ENCODE measurements at regions of chr9 and their contacts with region 1.

Region 1: DNA sequence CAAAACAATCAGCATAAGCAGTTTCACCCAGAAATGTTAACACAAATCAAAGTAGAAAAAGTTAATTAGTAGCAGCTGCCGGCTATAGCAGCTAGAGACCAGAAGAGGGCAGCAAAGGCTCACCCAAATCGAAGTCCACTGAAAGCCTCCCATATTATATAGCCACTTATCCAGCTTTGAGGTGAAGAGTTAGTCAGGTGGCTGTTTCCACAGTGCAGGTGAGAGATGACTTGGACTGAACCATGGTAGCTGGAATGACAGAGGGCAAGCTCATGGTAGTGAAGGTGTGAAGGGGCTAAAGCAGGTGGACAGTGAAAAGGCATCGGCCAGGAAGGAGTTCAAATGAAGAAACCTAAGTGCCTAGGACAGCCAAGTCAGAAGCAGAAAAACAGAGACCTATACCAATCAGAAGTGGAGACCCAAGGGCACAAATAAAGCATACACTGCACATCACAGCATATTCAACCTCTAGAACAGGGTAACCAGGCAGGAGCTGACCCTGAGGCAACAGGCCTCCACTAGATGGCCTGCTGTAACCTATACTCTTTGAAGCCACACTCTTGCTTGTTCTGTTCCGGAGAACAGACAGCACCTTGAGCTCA is 7.2 kb upstream of the RNF38 start:
- DNase-seq: peak; percentile 75
- ATAC-seq: peak; percentile 88
- H3K4me3 Mint-ChIP-seq: no peak overlapping the region
- H3K27ac Mint-ChIP-seq: no peak overlapping the region
- H3K4me1 Mint-ChIP-seq: peaks cover 12% of the 10 kb centered on the region
- H3K27me3 Mint-ChIP-seq: no peaks in the 10 kb centered on the region

Region 2: DNA sequence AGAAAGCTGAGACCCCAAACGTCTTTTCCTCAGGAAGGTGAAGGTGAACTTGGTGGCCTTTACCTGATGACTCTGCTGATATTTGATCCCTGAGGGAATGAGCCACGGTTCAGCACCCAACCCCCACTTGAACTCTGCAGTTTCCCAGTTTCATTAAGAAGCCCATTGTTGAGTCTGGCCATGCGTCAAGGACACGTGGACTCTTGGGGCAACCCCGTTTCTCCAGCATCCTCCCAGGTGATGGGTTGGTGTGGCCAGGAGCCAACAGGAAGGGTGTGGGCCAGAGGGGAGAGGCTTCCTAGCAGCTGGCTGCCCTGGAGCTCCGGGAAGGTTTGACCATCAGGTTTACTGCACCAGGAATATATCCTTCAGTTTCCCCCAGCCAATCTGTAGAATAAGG is 89.5 kb before region 1 on chr9:
- CTCF ChIA-PET with region 1: no interaction called
- POLR2A ChIA-PET with region 1: no interaction called
- DNase-seq: no peak
- ATAC-seq: no peak
- H3K4me3 Mint-ChIP-seq: no peak overlapping the region
- H3K27ac Mint-ChIP-seq: no peak overlapping the region
- H3K4me1 Mint-ChIP-seq: no peaks in the 10 kb centered on the region
- H3K27me3 Mint-ChIP-seq: peaks cover 5% of the 10 kb centered on the region

Region 3: DNA sequence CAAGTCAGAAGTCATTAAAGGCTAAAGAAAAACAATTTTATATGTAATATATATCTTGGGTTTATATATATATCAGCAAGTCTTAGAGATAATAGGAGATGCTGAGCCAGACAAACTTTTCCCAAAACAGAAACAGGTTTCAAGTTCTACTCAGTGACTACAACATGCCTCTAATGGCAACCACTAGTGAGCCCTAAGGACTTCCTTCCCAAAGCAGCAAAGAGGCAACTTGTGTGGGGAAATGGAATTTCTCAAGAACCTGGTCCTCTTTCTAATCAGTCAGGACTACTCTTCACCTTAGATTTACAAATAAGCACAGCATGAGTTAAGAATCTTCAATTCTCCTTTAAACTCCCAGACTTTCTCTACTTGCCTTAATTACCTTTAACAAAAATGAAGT is 24.7 kb before region 1 on chr9:
- CTCF ChIA-PET with region 1: interaction called, 10 read pairs
- POLR2A ChIA-PET with region 1: no interaction called
- DNase-seq: no peak
- ATAC-seq: no peak
- H3K4me3 Mint-ChIP-seq: no peak overlapping the region
- H3K27ac Mint-ChIP-seq: no peak overlapping the region
- H3K4me1 Mint-ChIP-seq: peaks cover 39% of the 10 kb centered on the region
- H3K27me3 Mint-ChIP-seq: no peaks in the 10 kb centered on the region

Region 4: DNA sequence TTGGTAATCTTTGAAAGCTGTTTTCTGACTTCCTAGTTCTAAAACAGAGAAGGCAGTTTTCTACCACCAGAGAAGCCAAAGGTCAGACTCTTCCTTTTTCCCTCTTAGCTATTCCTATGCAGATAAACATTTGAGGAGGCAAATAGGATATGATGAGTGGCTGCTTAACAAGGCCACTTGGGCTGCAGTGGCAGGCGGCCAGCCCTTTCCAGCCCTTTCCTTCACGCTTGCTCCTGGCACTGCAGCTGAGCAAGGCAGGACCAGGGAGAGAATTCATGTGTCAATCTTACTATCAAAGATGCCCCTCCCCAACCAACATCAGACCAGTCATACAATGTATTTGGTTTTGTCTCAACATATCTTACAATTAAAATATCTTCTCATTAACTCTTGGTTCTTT is 29.7 kb after region 1 on chr9:
- CTCF ChIA-PET with region 1: interaction called, 38 read pairs
- POLR2A ChIA-PET with region 1: interaction called, 3 read pairs
- DNase-seq: no peak
- ATAC-seq: no peak
- H3K4me3 Mint-ChIP-seq: no peak overlapping the region
- H3K27ac Mint-ChIP-seq: no peak overlapping the region
- H3K4me1 Mint-ChIP-seq: peaks cover 13% of the 10 kb centered on the region
- H3K27me3 Mint-ChIP-seq: no peaks in the 10 kb centered on the region

Region 5: DNA sequence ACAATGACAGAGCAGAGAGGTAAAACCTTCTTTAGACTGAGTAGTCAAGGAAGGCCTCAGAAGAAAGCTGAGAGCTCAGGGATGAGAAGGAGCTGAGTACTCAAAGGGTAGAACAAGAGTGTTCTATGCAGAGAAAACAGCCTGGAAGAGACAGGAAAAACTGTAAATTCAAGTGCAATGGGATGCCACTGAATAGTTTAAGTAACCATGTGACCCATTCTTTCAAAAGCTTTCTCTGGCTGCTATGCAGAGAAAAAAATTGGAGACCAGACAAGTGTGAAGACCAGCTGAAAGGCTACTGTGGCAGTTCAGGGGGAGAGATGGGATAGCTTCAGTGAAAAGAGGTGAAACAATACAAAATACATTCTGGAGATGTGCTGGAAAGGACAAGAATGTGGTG is 54.1 kb after region 1 on chr9:
- CTCF ChIA-PET with region 1: interaction called, 29 read pairs
- POLR2A ChIA-PET with region 1: interaction called, 3 read pairs
- DNase-seq: no peak
- ATAC-seq: no peak
- H3K4me3 Mint-ChIP-seq: no peak overlapping the region
- H3K27ac Mint-ChIP-seq: no peak overlapping the region
- H3K4me1 Mint-ChIP-seq: peaks cover 64% of the 10 kb centered on the region
- H3K27me3 Mint-ChIP-seq: no peaks in the 10 kb centered on the region

Region 6: GRCh38 chr9:36551129-36551528 is 143.9 kb after region 1 on chr9:
- CTCF ChIA-PET with region 1: interaction called, 193 read pairs
- POLR2A ChIA-PET with region 1: no interaction called
- DNase-seq: no peak
- ATAC-seq: no peak
- H3K4me3 Mint-ChIP-seq: no peak overlapping the region
- H3K27ac Mint-ChIP-seq: no peak overlapping the region
- H3K4me1 Mint-ChIP-seq: peaks cover 3% of the 10 kb centered on the region
- H3K27me3 Mint-ChIP-seq: peaks cover 18% of the 10 kb centered on the region

Region 7: GRCh38 chr9:36572515-36573418 is 165.5 kb after region 1 on chr9 and contains the start of gene MELK:
- CTCF ChIA-PET with region 1: interaction called, 18 read pairs
- POLR2A ChIA-PET with region 1: no interaction called
- DNase-seq: peak; percentile 89
- ATAC-seq: peak; percentile 77
- H3K4me3 Mint-ChIP-seq: peak within 1 kb of the TSS; percentile 97
- H3K27ac Mint-ChIP-seq: peak within 1 kb of the TSS; percentile 92
- H3K4me1 Mint-ChIP-seq: peaks cover 41% of the 10 kb centered on the region
- H3K27me3 Mint-ChIP-seq: peaks cover 12% of the 10 kb centered on the region
- total RNA-seq, gene MELK: 73.4 to 74.9 TPM